Breast epithelium (tissue), 4 donors: ENCODE measurements at regions of chr11 and their contacts with region 1.

Region 1: GRCh38 chr11:27847496-27847895 is 147.2 kb upstream of the BDNF start:
- DNase-seq: no peak
- H3K4me3 ChIP-seq: no peak overlapping the region
- H3K27ac ChIP-seq: no peak overlapping the region
- H3K4me1 ChIP-seq: no peaks in the 10 kb centered on the region
- H3K27me3 ChIP-seq: no peaks in the 10 kb centered on the region
- CTCF ChIP-seq: no peak
- POLR2A ChIP-seq: no peak

Region 2: DNA sequence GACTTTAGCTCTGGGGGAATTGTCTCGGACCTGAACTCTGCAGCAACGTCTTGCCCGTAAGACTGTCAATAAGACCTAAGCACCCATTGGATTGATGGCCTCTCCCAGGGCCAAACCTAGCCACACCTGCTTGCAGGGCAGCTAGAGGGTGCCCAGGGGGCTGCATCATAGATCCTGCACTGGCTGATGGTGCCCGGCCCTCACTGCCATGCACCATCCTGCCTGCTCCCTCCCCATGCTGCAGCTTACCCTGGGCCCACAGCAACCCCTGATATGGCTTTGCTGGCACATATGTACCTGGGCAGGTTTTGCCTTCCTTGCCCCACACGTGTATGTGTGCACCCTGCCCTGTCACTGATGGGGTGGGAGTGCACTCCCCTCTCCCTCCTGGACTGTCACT is 815.7 kb before region 1 on chr11:
- intact Hi-C with region 1: loop called (anchors 5 kb)
- DNase-seq: no peak
- H3K4me3 ChIP-seq: no peak overlapping the region
- H3K27ac ChIP-seq: no peak overlapping the region
- H3K4me1 ChIP-seq: peaks cover 0 to 4% of the 10 kb centered on the region in 2 donors
- H3K27me3 ChIP-seq: no peaks in the 10 kb centered on the region
- CTCF ChIP-seq: no peak
- POLR2A ChIP-seq: no peak

Region 3: DNA sequence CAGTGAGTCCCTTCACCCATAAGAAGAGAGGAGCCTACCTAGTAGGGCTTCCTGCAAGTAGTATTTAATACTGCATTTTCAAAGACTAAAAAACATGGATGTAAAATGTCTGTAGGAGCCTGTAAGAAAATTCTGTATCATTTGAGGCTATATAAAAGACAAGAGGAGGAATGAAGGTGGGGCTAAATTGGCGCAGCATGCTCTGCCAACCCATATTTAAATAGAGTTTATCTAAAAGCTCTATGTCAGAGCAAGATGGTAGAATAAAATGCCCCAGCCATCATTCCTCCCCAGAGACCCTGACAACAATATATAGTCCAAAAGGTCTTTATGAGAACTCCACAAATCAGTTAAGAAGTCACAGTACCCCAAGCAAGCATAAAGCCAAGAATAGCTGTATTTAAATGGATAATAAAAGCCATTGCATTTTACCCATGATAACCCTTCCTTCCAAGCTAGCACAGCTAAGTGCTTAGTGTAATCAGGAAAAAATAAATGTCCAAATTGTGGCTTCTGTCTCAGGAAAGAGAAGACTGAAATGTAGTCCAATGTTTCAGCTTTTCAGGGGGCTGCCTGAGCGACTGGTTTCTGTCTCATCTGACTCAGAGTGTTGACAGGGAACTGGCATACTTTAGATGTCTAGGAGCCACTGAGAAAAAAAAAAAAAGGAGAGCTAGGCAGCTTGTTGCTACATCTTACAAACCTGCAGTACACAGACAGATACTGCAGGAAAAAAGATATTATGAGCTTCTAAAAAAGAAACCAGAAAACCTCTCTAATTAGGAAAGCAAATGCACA is 519.3 kb after region 1 on chr11:
- intact Hi-C with region 1: no loop called
- DNase-seq: no peak
- H3K4me3 ChIP-seq: no peak overlapping the region
- H3K27ac ChIP-seq: no peak overlapping the region
- H3K4me1 ChIP-seq: no peaks in the 10 kb centered on the region
- H3K27me3 ChIP-seq: no peaks in the 10 kb centered on the region
- CTCF ChIP-seq: no peak
- POLR2A ChIP-seq: no peak